ENCODE measurements at regions of chr4 and their contacts with region 1.

Region 1: DNA sequence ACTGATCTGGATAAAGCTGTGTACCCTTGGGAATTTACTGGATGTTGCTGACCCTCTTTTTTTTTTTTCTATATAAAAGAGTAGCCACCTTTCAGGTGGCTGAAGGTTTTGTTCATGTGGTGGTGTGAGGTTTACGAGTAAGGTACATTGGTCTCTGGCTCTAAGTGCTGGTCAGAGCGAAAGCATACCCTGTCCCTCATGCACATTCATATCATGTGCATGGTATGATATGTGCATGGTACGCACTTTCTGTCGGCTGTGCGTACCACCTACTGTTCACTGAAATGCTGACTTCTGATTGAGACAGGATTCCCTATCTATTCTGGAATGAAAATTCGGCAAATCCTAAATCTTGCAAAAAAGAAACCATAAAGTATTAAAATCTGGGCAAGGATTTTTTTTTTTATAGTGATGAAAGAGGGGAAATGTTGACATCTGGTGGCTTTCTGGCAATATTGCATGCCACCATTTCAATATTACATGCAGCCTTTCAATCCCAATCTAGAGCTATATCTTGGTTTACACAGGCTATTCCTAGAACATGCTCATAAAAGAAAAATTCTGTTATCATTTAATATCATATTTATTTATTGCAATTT is 32.8 kb downstream of the FAM149A start:
- DNase-seq: no peak
- ATAC-seq: peak in 1 of 2 donors; percentile 31
- H3K4me3 ChIP-seq: no peak overlapping the region
- H3K27ac ChIP-seq: no peak overlapping the region
- H3K4me1 ChIP-seq: no peaks in the 10 kb centered on the region
- H3K27me3 ChIP-seq: no peaks in the 10 kb centered on the region

Region 2: GRCh38 chr4:186067757-186068385 is 69.4 kb before region 1 on chr4:
- intact Hi-C with region 1: loop called (anchors 5 to 10 kb)
- DNase-seq: peak; percentile 57 to 78 (median 69)
- ATAC-seq: peak; percentile 94 to 95
- H3K4me3 ChIP-seq: peak overlapping the region; percentile 99
- H3K27ac ChIP-seq: peak overlapping the region; percentile 23
- H3K4me1 ChIP-seq: no peaks in the 10 kb centered on the region
- H3K27me3 ChIP-seq: no peaks in the 10 kb centered on the region

Region 3: GRCh38 chr4:186074189-186074588 is 63.1 kb before region 1 on chr4:
- intact Hi-C with region 1: loop called (anchors 5 to 10 kb)
- DNase-seq: peak in 1 of 3 donors; percentile 55
- ATAC-seq: peak; percentile 64 to 85
- H3K4me3 ChIP-seq: no peak overlapping the region
- H3K27ac ChIP-seq: no peak overlapping the region
- H3K4me1 ChIP-seq: no peaks in the 10 kb centered on the region
- H3K27me3 ChIP-seq: no peaks in the 10 kb centered on the region